Posterior vena cava (tissue), 2 donors: ENCODE measurements at regions of chr5 and their contacts with region 1.

Region 1: GRCh38 chr5:154811653-154812365 is 38.6 kb downstream of the FAXDC2 start:
- DNase-seq: no peak

Region 2: GRCh38 chr5:154647114-154647760 is 164.6 kb before region 1 on chr5:
- intact Hi-C with region 1: loop called (anchors 5 to 10 kb)
- DNase-seq: peak; percentile 80

Region 3: GRCh38 chr5:154654486-154655371 is 157.1 kb before region 1 on chr5:
- intact Hi-C with region 1: loop called (anchors 5 to 10 kb)
- DNase-seq: no peak

Region 4: DNA sequence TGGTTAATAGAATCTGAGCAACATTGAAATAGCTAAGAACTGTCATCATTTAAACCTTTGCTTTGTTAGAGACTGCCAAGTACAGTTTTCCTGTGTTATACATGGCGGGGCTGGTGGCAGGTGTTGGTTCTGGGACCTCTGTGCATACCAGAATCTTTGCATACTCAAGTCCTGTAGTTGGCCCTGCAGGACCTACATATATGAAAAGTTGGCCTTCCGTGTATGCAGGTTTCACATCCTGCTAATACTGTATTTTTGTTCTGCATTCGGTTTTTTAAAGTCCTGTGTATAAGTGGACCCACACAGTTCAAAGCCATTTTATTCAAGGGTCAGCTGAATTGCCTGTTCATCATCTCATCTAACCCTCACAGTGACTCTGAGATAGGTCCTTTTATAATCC is 20.3 kb before region 1 on chr5:
- intact Hi-C with region 1: no loop called
- DNase-seq: no peak

Region 5: DNA sequence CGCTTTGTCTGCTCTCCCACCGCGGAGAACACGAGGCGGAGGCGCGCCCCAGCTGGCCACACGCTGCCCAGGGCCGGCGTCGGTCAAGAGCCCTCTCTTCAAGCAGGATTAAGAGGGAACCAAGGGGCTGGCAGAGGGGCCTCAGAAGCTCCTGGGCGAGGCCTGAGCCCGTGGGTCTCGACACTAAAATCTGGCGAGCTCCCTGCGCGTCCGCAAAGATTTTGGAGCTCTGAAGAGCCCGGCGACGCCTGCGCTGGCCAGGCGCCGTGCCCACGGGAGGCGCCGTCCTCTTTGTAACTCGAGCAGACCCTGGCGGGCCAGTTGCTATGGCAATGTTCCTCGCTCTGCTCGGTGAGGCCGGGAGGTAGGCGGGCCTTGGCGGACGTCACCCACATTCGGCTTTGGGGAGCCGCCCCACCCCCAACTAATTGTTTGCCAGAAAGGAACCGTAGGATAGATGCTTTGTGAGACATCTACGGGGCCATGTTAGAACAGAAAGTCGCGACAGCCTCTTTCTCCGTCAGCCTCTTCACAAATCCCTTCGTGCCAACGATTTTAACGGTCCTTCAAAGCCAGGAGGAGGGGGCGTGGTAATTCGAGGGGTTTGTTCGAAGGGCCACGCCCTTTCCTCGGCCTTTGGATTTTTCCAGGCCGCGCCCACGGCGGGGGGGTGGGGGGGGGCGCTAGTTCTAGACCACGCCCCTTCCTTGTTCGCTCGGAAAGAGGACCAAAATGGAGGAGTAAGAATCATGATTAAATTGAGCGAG is 45.9 kb after region 1 on chr5:
- intact Hi-C with region 1: loop called in 1 of 2 experiments (anchors 1 kb)
- DNase-seq: peak; percentile 99